ENCODE measurements at regions of chr5 and their contacts with region 1.

Region 1: DNA sequence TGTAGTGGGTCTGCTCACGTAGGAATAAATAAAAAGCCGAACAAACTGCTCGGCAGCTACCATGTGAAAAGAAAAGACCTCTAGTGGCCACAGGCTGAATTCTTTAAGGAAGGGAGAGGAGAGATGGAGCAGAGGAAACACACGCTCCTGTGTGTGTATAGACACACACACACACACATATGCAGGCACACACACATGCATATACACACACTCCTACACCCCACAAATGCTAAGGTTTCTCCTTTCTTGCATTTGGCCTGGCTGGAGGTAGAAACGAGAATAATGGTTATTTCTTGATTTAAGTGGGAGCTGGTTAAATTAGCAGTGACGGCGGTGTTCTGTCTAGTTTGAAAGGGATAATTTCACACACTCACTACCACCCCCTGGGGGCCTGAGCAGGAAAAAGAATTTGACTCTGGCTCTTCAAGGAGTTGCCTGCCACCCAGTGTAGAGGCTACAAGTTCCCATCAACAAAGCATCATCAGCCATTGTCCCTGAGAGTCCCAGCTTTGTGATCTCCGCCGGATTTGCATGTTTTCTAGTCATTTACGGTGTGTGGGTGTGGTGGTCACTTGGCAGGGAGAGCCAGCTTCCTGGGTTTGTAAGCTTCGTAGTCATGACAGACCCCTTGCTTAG is at the start of gene INSYN2B:
- DNase-seq: peak; percentile 66 to 73
- H3K4me3 ChIP-seq: peak within 1 kb of the TSS; percentile 56
- H3K27ac ChIP-seq: peak within 1 kb of the TSS; percentile 27
- H3K4me1 ChIP-seq: peaks cover 41% of the 10 kb centered on the region
- H3K27me3 ChIP-seq: no peaks in the 10 kb centered on the region
- CTCF ChIP-seq: peak; percentile 86
- total RNA-seq, gene INSYN2B: 0.13 TPM in 1 of 2 replicates, not detected in the other

Region 2: DNA sequence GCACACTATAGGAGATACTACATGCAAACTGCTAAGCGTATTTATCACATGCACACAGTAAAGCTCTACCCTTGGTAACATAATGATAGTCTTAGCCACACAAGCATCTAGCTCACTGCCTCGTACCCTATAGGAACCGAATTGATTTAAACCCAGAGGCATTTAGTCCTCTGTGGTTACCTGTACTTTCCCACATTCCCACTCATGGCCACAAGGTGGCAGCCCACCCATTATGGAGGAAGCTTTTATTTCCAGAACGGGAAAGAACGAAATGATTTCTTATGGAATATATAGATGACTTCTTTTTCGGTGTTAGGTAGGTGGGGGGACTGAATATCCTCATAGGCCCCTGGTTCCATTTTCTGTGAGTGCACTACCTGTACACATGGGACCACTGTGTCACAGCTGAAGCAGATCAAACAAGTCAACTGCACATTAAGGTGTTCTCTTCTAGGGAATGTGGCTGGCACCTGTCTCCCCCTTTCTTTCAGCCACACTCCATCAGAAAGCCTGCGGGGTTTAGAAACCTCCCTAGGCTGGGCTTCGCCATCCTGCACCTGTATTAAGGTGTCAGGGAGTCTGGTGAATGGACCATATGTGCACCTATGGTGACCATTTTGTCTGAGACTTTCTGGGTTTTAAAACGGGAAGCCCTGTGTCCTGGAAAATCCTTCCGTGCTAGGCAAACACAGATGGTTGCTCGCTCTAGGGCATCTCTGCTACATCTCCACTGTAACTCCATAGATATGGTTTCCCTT is 992.8 kb before region 1 on chr5:
- CTCF ChIA-PET with region 1: no interaction called
- POLR2A ChIA-PET with region 1: no interaction called
- intact Hi-C with region 1: loop called (anchors 5 kb)
- DNase-seq: peak; percentile 44 to 61
- H3K4me3 ChIP-seq: no peak overlapping the region
- H3K27ac ChIP-seq: no peak overlapping the region
- H3K4me1 ChIP-seq: no peaks in the 10 kb centered on the region
- H3K27me3 ChIP-seq: peaks cover 65% of the 10 kb centered on the region
- CTCF ChIP-seq: peak; percentile 89

Region 3: DNA sequence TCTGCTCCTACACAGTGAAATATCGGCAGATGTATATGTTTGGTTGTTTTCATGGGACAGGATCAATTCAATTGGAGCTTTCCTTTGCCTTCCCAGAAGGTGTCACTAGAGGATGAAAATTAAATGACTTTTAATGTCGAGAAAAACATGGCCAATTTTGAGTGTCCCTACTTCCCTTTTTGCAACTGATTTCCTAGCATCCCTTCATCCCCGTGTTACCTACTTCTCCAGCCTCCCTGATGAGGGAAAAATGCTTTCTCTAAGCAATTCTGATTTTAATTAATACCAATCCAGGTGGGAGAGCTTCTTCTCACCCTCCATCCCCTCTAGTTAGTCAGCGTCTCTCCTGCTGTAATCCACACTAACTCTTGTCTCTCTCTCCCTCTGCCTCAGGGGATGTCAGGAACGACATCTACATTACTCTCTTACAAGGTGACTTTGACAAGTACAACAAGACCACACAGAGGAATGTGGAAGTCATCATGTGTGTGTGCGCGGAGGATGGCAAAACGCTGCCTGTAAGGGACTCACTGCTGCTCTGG is 278.6 kb before region 1 on chr5:
- CTCF ChIA-PET with region 1: interaction called, 8 read pairs
- POLR2A ChIA-PET with region 1: no interaction called
- intact Hi-C with region 1: loop called (anchors 1 kb)
- DNase-seq: peak in 1 of 2 experiments; percentile 56
- H3K4me3 ChIP-seq: no peak overlapping the region
- H3K27ac ChIP-seq: no peak overlapping the region
- H3K4me1 ChIP-seq: peaks cover 11% of the 10 kb centered on the region
- H3K27me3 ChIP-seq: no peaks in the 10 kb centered on the region
- CTCF ChIP-seq: peak; percentile 65; the same call in 1 of the 2 replicates

Region 4: GRCh38 chr5:169706758-169707691 is 273.5 kb before region 1 on chr5:
- CTCF ChIA-PET with region 1: interaction called, 8 read pairs
- POLR2A ChIA-PET with region 1: no interaction called
- intact Hi-C with region 1: loop called (anchors 1 kb)
- DNase-seq: no peak
- H3K4me3 ChIP-seq: no peak overlapping the region
- H3K27ac ChIP-seq: no peak overlapping the region
- H3K4me1 ChIP-seq: no peaks in the 10 kb centered on the region
- H3K27me3 ChIP-seq: no peaks in the 10 kb centered on the region
- CTCF ChIP-seq: no peak

Region 5: DNA sequence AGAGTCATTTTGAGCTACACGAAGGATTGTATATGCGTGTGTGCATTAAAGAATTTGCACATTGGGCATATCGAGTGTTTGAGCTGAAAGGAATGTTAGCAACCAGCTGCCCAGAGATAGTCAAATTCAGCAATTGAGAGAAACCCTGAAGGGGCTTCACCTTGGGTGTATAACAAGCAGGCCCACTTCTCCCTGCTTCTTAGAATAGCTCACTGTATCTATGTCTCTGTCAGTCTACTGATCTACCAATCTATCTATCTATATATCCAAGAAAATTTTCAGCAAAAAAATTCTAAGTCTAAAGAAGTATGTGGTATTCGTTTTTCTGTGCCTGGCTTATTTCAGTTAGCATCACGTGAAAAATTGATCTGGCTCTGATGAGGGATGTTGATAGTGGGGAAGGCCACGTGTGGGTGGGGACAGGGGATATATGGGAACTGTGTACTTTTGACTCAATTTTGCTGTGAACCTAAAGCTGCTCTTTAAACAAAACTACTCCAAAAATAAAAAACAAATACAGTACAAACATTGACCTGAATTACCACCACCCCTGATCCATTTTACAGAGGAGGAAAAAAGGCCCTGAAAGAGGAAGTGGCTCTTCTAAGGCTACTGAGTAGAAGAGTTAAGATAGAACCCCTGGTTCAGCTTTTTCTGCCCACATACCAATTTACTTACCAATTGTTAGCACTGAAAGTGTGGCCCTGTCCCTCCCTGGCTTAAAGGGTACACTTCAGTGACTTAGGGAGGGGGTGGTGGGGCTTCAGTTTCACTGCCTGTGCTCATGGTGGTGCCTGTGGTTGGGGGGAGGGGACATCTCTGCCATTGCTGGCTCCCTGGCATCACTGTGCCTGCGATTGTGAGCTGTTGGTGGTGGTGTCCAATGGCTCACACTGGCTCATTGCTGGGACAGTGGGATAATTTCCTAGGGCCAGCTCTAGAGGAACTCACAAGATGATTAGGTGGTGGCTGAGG is 201.6 kb before region 1 on chr5:
- CTCF ChIA-PET with region 1: no interaction called
- POLR2A ChIA-PET with region 1: no interaction called
- intact Hi-C with region 1: no loop called
- DNase-seq: no peak
- H3K4me3 ChIP-seq: no peak overlapping the region
- H3K27ac ChIP-seq: no peak overlapping the region
- H3K4me1 ChIP-seq: no peaks in the 10 kb centered on the region
- H3K27me3 ChIP-seq: no peaks in the 10 kb centered on the region
- CTCF ChIP-seq: no peak

Region 6: DNA sequence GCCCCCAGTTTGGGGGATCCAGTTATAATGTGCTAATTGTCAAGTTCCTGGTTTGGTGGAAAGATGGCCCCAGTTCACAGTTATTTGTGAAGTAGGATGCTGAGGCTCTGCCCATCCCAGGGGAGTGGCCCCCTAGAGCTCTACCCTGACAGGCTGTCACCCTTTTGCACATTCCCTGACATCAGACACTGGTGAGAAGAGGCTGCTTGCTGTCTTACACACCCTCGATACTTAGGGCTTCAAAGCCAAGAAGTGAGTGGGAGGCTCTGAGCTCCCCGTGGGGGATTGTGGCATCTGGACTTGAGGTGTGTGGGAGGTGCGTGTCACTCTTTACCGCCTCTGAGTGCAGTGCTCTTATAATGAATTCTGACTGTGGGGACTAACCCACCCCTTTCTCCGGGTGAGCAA is 175.0 kb before region 1 on chr5:
- CTCF ChIA-PET with region 1: no interaction called
- POLR2A ChIA-PET with region 1: no interaction called
- intact Hi-C with region 1: loop called (anchors 10 kb)
- DNase-seq: no peak
- H3K4me3 ChIP-seq: no peak overlapping the region
- H3K27ac ChIP-seq: no peak overlapping the region
- H3K4me1 ChIP-seq: peaks cover 38% of the 10 kb centered on the region
- H3K27me3 ChIP-seq: no peaks in the 10 kb centered on the region
- CTCF ChIP-seq: no peak

Region 7: DNA sequence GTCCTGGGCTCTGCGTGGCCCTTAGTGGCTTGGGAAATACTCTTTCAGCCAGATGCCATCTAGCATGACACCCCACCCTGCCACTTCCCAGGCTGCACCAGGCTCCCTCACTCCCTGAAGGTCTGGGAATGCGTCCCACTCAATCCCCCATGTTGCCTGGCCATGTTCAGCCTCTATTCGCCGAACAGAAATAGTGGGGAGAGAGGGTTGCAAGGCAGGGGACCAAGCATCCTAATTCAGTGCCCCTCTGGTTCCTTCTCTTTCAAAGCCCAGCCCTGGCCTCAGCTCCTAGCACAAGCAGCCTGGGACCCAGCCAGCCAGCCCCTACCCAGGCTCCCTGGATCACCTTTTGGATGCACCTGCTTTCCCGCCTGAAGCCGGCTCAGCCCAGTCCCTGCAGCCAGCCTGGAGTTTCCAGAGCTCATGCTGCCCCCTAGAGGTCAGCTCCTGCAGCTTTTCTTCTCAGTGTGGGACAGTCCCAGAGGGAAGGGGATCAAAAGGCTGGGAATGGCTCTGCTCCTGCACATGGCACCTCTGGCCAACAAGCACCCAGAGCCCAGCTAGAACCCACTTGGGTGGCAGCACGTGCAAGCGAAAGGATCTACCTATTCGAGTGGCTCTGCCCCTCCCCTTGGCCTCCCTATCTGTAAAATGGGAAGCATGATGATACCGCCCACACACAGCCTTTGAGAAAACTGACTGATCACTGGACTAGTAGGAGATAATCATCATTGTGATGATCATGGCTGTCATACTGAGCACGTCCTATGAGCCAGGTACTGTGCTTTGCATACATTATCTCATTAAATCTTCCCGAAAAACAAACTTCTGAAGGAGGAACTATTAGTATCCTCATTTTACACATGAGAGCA is 203.5 kb after region 1 on chr5:
- CTCF ChIA-PET with region 1: no interaction called
- POLR2A ChIA-PET with region 1: no interaction called
- intact Hi-C with region 1: loop called (anchors 10 kb)
- DNase-seq: peak in 1 of 2 experiments; percentile 80
- H3K4me3 ChIP-seq: no peak overlapping the region
- H3K27ac ChIP-seq: no peak overlapping the region
- H3K4me1 ChIP-seq: peaks cover 21% of the 10 kb centered on the region
- H3K27me3 ChIP-seq: no peaks in the 10 kb centered on the region
- CTCF ChIP-seq: peak; percentile 93

Measured in PC-9 (cell line).